K562 (cell line): ENCODE measurements at regions of chr12 and their contacts with region 1.

Region 1: DNA sequence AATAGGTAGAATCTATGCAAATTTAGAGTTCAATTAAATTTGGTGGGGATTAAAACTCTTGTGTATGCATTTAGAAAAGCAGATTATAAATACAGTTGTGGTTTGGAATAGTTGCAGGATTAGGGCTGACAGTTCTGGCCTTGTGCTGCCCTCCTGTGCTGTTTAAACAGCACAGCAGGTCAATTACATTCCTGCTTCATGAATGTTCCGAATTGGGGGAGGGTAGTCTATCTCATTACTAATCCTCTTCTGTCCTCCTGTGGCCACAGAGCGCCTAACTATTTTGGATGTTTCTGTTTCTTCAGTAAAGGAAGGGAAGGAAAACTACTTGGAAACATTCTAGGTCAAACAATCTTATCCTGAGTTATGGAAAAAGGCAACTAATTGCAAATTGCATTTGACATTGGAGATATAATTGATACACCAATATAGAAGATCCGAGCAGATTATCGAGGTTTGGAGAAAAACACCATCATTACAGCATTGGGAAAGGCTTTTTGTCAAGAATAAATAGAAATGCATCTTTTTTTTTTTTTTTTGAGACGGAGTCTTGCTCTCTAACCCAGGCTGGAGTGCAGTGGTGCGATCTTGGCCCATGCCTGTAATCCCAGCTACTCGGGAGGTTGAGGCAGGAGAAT is 8.7 kb upstream of the GPR19 start:
- DNase-seq: peak; percentile 67 to 84 (median 72)
- ATAC-seq: peak; percentile 99
- H3K4me3 ChIP-seq: no peak overlapping the region
- H3K27ac ChIP-seq: no peak overlapping the region
- H3K4me1 ChIP-seq: peaks cover 3 to 6% of the 10 kb centered on the region in 2 experiments; a peak in 2 of 5 replicates
- H3K27me3 ChIP-seq: no peaks in the 10 kb centered on the region
- CTCF ChIP-seq: peak; percentile 92 to 99 (median 97)
- EP300 ChIP-seq: peak; percentile 16; the same call in 1 of the 2 replicates
- POLR2A ChIP-seq: no peak
- RAD21 ChIP-seq: peak; percentile 97 to 98

Region 2: DNA sequence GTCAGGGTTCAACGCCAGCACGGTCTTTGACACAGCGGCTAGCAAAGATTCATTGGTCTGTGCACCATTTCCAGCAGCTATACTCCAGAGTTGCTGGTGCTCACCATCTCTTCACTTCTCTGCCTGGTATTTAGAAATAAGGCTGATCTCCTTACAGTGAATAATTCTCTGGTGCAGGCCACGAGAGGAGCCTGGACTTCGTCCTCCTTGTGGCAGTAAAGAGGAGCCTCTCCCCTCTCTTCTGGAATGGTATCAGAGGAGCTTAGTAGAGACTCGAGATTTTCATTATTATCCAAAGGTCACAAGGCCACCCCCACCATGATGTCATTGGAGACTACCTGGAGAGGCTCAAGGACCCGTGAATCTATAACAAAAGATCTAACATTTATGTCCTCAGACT is 664.8 kb before region 1 on chr12:
- CTCF ChIA-PET with region 1: no interaction called
- POLR2A ChIA-PET with region 1: interaction called, 4 read pairs
- in situ Hi-C with region 1: no loop called
- intact Hi-C with region 1: loop called (anchors 5 kb)
- DNase-seq: no peak
- ATAC-seq: no peak
- H3K4me3 ChIP-seq: no peak overlapping the region
- H3K27ac ChIP-seq: no peak overlapping the region
- H3K4me1 ChIP-seq: no peaks in the 10 kb centered on the region
- H3K27me3 ChIP-seq: no peaks in the 10 kb centered on the region
- CTCF ChIP-seq: no peak
- EP300 ChIP-seq: no peak
- POLR2A ChIP-seq: no peak
- RAD21 ChIP-seq: no peak

Region 3: GRCh38 chr12:12376646-12377448 is 327.9 kb before region 1 on chr12:
- CTCF ChIA-PET with region 1: interaction called, 55 read pairs
- POLR2A ChIA-PET with region 1: no interaction called
- in situ Hi-C with region 1: loop called (anchors 10 kb)
- intact Hi-C with region 1: loop called (anchors 1 kb)
- DNase-seq: peak; percentile 22 to 61 (median 36)
- ATAC-seq: peak; percentile 88
- H3K4me3 ChIP-seq: no peak overlapping the region
- H3K27ac ChIP-seq: no peak overlapping the region
- H3K4me1 ChIP-seq: no peaks in the 10 kb centered on the region
- H3K27me3 ChIP-seq: no peaks in the 10 kb centered on the region
- CTCF ChIP-seq: peak; percentile 44 to 84 (median 53); a peak in 4 of 6 replicates
- EP300 ChIP-seq: no peak
- POLR2A ChIP-seq: no peak
- RAD21 ChIP-seq: peak; percentile 94 to 95

Region 4: GRCh38 chr12:12611512-12612306 is 93.0 kb before region 1 on chr12 and contains the start of gene CREBL2:
- CTCF ChIA-PET with region 1: no interaction called
- POLR2A ChIA-PET with region 1: no interaction called
- in situ Hi-C with region 1: no loop called
- intact Hi-C with region 1: loop called (anchors 5 kb)
- DNase-seq: peak; percentile 77 to 90 (median 80)
- ATAC-seq: peak; percentile 92
- H3K4me3 ChIP-seq: peak within 1 kb of the TSS; percentile 61
- H3K27ac ChIP-seq: peak within 1 kb of the TSS; percentile 76
- H3K4me1 ChIP-seq: peaks cover 0 to 11% of the 10 kb centered on the region in 2 experiments; a peak in 3 of 5 replicates
- H3K27me3 ChIP-seq: no peaks in the 10 kb centered on the region
- CTCF ChIP-seq: no peak
- EP300 ChIP-seq: no peak
- POLR2A ChIP-seq: peak; percentile 75
- RAD21 ChIP-seq: no peak
- polyA plus RNA-seq, gene CREBL2: 1.7 to 1.9 TPM